ENCODE measurements at regions of chr14 and their contacts with region 1.

Region 1: GRCh38 chr14:55610713-55611370 is 30.8 kb downstream of the KTN1 start:
- DNase-seq: no peak
- ATAC-seq: no peak
- H3K4me3 ChIP-seq: no peak overlapping the region
- H3K4me3 Mint-ChIP-seq: no peak overlapping the region
- H3K27ac ChIP-seq: no peak overlapping the region
- H3K27ac Mint-ChIP-seq: peak overlapping the region in 1 of 9 donors; percentile 10
- H3K4me1 ChIP-seq: no peaks in the 10 kb centered on the region
- H3K4me1 Mint-ChIP-seq: peaks cover 5 to 70% (median 59%) of the 10 kb centered on the region in 7 donors
- H3K27me3 ChIP-seq: no peaks in the 10 kb centered on the region
- H3K27me3 Mint-ChIP-seq: no peaks in the 10 kb centered on the region

Region 2: GRCh38 chr14:54040846-54041245 is 1570.0 kb before region 1 on chr14:
- CTCF ChIA-PET with region 1: no interaction called
- POLR2A ChIA-PET with region 1: no interaction called
- intact Hi-C with region 1: no loop called
- DNase-seq: no peak
- ATAC-seq: no peak
- H3K4me3 ChIP-seq: no peak overlapping the region
- H3K4me3 Mint-ChIP-seq: no peak overlapping the region
- H3K27ac ChIP-seq: no peak overlapping the region
- H3K27ac Mint-ChIP-seq: no peak overlapping the region
- H3K4me1 ChIP-seq: no peaks in the 10 kb centered on the region
- H3K4me1 Mint-ChIP-seq: no peaks in the 10 kb centered on the region
- H3K27me3 ChIP-seq: no peaks in the 10 kb centered on the region
- H3K27me3 Mint-ChIP-seq: peaks cover 0 to 24% (median 4%) of the 10 kb centered on the region in 5 donors

Region 3: DNA sequence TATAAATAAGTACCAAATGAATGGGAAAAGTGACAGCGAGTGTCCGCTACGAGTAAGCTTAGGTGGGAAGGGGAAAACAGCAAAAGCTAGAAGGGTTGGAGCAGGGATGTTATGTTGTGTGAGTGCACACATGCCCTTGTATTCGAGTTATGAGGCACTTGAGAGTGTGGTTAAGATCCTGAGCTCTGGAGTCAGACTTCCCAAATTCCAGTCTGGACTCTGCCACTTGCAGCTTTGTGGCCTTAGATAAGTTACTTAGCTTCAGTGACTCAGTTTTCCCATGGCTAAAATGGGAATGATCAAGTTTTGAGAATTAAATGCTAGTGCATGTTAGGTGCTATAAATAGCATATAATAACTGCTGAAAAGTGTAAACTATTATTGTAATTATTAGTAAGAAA is 14.1 kb after region 1 on chr14:
- CTCF ChIA-PET with region 1: no interaction called
- POLR2A ChIA-PET with region 1: no interaction called
- intact Hi-C with region 1: no loop called
- DNase-seq: no peak
- ATAC-seq: no peak
- H3K4me3 ChIP-seq: no peak overlapping the region
- H3K4me3 Mint-ChIP-seq: no peak overlapping the region
- H3K27ac ChIP-seq: no peak overlapping the region
- H3K27ac Mint-ChIP-seq: peak overlapping the region in 1 of 9 donors; percentile 1
- H3K4me1 ChIP-seq: no peaks in the 10 kb centered on the region
- H3K4me1 Mint-ChIP-seq: peaks cover 1 to 17% (median 14%) of the 10 kb centered on the region in 7 donors
- H3K27me3 ChIP-seq: no peaks in the 10 kb centered on the region
- H3K27me3 Mint-ChIP-seq: no peaks in the 10 kb centered on the region

Region 4: GRCh38 chr14:55638665-55639064 is 27.8 kb after region 1 on chr14:
- CTCF ChIA-PET with region 1: no interaction called
- POLR2A ChIA-PET with region 1: no interaction called
- intact Hi-C with region 1: loop called in 1 of 2 experiments (anchors 2 kb)
- DNase-seq: no peak
- ATAC-seq: no peak
- H3K4me3 ChIP-seq: no peak overlapping the region
- H3K4me3 Mint-ChIP-seq: no peak overlapping the region
- H3K27ac ChIP-seq: no peak overlapping the region
- H3K27ac Mint-ChIP-seq: no peak overlapping the region
- H3K4me1 ChIP-seq: no peaks in the 10 kb centered on the region
- H3K4me1 Mint-ChIP-seq: peaks cover 0 to 13% (median 4%) of the 10 kb centered on the region in 7 donors
- H3K27me3 ChIP-seq: no peaks in the 10 kb centered on the region
- H3K27me3 Mint-ChIP-seq: no peaks in the 10 kb centered on the region

Measured in naive thymus-derived CD4-positive, alpha-beta T cell (primary cell).